Natural killer cell (primary cell): ENCODE measurements at regions of chr1 and their contacts with region 1.

Region 1: DNA sequence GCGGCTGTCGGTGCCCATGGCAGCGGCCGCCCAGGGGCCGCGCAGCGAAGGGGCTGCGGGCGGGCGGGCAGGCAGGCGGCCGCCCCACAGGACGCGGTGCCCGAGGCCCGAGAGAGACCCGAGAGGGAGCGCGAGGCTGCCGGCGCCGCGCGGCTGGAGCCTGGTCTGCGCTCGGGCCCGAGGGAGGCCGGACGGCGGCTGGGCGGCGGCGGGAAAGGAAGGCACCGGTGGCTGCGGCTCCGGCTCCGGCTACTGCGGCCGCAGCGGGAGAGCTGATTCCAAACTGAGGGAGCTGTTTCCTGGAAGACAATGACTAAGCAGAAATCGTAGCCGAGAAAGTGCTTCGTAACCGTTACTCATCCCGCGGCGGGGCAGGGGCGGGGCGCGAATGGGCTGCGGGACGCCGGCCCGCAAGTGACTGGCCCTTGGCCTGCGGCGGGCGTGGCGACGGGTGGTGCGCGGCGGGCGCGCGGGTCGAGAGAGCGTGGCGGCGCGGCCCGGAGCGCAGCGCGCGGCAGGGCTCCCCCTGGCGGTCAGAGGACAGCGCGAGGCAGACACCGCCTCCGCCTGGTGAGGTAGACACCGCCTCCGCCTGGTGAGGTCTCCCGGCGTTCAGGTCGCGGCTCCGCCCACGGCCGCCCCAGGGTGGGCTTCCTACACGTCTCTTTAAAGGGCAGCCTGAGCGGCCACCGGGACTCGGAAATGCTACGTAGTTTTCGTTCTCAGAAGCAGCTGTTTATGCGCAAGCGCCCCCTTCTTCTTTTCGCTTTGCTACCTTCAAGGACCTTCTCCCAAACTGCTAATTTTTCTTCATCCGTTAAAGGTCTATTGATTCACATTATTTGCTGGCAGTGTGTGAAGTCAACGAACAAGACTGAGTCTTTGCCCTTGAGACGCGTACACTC is at the start of gene GCLM:
- DNase-seq: peak; percentile 92 to 95
- ATAC-seq: peak; percentile 89 to 98 (median 92)
- H3K4me3 ChIP-seq: peak within 1 kb of the TSS; percentile 66
- H3K4me3 Mint-ChIP-seq: peak within 1 kb of the TSS; percentile 96
- H3K27ac ChIP-seq: peak within 1 kb of the TSS; percentile 91
- H3K27ac Mint-ChIP-seq: peak within 1 kb of the TSS; percentile 94 to 97
- H3K4me1 ChIP-seq: peaks cover 13% of the 10 kb centered on the region
- H3K4me1 Mint-ChIP-seq: peaks cover 36% of the 10 kb centered on the region in 2 donors
- H3K27me3 ChIP-seq: no peaks in the 10 kb centered on the region
- H3K27me3 Mint-ChIP-seq: no peaks in the 10 kb centered on the region
- CTCF ChIP-seq: peak; percentile 96
- total RNA-seq, gene GCLM: 16.1 to 25.5 (median 18.6) TPM

Region 2: GRCh38 chr1:93629099-93630059 is 280.0 kb before region 1 on chr1:
- intact Hi-C with region 1: loop called (anchors 1 kb)
- DNase-seq: peak in 1 of 2 donors; percentile 81
- ATAC-seq: peak; percentile 76 to 94 (median 91)
- H3K4me3 ChIP-seq: no peak overlapping the region
- H3K4me3 Mint-ChIP-seq: no peak overlapping the region
- H3K27ac ChIP-seq: no peak overlapping the region
- H3K27ac Mint-ChIP-seq: no peak overlapping the region
- H3K4me1 ChIP-seq: no peaks in the 10 kb centered on the region
- H3K4me1 Mint-ChIP-seq: no peaks in the 10 kb centered on the region
- H3K27me3 ChIP-seq: no peaks in the 10 kb centered on the region
- H3K27me3 Mint-ChIP-seq: peaks cover 0 to 7% of the 10 kb centered on the region in 2 donors
- CTCF ChIP-seq: peak; percentile 83

Region 3: GRCh38 chr1:93878889-93879586 is 30.4 kb before region 1 on chr1 and contains the start of gene DNTTIP2:
- intact Hi-C with region 1: loop called (anchors 1 kb)
- DNase-seq: peak; percentile 85 to 93
- ATAC-seq: peak; percentile 73 to 86 (median 84)
- H3K4me3 ChIP-seq: peak within 1 kb of the TSS; percentile 81
- H3K4me3 Mint-ChIP-seq: peak within 1 kb of the TSS; percentile 94
- H3K27ac ChIP-seq: peak within 1 kb of the TSS; percentile 94
- H3K27ac Mint-ChIP-seq: peak within 1 kb of the TSS; percentile 95 to 99
- H3K4me1 ChIP-seq: peaks cover 10% of the 10 kb centered on the region
- H3K4me1 Mint-ChIP-seq: peaks cover 42 to 45% of the 10 kb centered on the region in 2 donors
- H3K27me3 ChIP-seq: no peaks in the 10 kb centered on the region
- H3K27me3 Mint-ChIP-seq: no peaks in the 10 kb centered on the region
- CTCF ChIP-seq: no peak
- total RNA-seq, gene DNTTIP2: 88.5 to 104 (median 97.3) TPM

Region 4: DNA sequence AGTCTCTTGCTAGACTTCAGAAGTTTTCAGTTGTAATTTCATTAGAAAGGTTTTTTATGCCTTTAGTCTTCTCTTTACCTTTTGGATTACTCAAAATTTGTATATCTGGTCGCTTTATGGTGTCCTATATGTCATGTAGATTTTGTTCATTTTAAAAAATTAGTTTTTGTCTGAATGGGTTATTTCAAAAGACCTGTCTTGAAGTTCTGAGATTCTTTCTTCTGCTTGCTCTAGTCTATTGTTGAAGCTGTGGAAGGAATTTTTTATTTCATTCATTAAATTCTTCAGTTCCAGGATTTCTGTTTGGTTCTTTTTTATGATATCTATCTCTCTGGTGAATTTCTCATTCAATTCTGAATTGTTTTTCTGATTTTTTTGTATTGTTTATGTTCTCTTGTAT is 46.4 kb after region 1 on chr1:
- intact Hi-C with region 1: no loop called
- DNase-seq: no peak
- ATAC-seq: no peak
- H3K4me3 ChIP-seq: no peak overlapping the region
- H3K4me3 Mint-ChIP-seq: no peak overlapping the region
- H3K27ac ChIP-seq: no peak overlapping the region
- H3K27ac Mint-ChIP-seq: no peak overlapping the region
- H3K4me1 ChIP-seq: no peaks in the 10 kb centered on the region
- H3K4me1 Mint-ChIP-seq: peaks cover 0 to 5% of the 10 kb centered on the region in 2 donors
- H3K27me3 ChIP-seq: no peaks in the 10 kb centered on the region
- H3K27me3 Mint-ChIP-seq: peaks cover 0 to 6% of the 10 kb centered on the region in 2 donors
- CTCF ChIP-seq: no peak

Region 5: DNA sequence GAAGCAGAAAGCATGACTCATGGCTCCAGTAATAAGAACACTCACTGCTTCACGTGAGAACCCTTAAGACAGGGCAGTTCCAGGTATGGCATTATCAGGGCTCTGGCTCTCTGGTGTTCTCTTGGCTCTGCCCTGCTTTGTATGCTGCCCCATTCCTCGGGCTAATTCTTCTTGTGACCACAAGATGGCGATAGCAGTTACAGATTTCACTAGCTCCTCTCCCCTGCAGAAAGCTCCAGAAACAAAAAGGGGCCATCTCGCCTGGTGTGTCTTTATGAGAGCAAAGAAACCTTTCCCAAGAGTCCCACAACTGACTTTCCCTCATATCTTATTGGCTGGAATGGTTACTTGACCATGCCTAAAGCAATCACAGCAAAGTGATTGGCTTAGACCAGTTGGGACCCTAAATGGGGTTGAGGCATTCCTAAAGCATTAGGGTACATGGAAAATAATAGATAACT is 572.1 kb after region 1 on chr1:
- intact Hi-C with region 1: no loop called
- DNase-seq: peak in 1 of 2 donors; percentile 74
- ATAC-seq: peak; percentile 78 to 83 (median 80)
- H3K4me3 ChIP-seq: no peak overlapping the region
- H3K4me3 Mint-ChIP-seq: no peak overlapping the region
- H3K27ac ChIP-seq: no peak overlapping the region
- H3K27ac Mint-ChIP-seq: no peak overlapping the region
- H3K4me1 ChIP-seq: no peaks in the 10 kb centered on the region
- H3K4me1 Mint-ChIP-seq: peaks cover 0 to 2% of the 10 kb centered on the region in 2 donors
- H3K27me3 ChIP-seq: no peaks in the 10 kb centered on the region
- H3K27me3 Mint-ChIP-seq: no peaks in the 10 kb centered on the region
- CTCF ChIP-seq: peak; percentile 81